ENCODE measurements at regions of chr12 and their contacts with region 1.

Region 1: DNA sequence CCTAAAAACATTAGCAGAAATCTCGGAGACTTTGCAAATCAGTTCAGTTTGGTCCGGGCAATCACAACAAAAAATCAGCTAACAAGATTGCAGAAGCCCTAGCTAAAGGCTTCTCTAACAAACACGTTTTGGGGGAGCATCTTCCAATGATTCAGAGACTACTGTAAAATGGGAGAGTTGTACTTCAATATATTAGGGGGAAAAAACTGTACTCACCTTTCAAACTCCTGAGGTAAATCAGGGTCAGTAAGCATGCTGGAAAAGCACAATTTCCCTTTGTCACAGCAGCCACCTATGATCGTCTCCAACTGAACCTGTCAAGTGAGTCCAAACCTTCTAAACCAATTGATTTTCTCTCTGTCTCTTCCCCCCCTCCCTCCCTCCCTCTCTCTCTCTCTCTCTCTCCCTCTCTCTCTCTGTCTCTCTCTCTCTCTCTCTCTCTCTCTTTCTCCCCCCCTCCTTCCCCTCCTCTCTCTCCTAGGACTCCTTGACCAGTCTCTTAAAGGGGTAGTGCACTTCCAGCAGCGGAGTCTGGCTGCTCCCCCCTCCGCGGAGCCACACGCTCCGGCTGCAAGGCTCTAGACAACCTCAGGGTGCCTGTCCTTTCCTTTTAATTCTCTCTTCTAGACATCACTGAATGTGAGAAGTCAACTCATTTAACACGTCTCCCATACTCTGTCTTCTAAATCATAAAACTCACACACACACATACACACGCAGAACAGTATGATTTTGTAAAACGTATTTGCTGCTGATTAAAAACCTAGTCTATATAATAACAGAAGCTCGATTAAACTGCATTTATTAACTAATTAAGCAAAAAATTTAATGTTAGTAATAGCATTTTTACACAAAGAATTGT is at the start of gene SOX5:
- DNase-seq: no peak
- H3K4me3 Mint-ChIP-seq: no peak within 1 kb of the TSS
- H3K27ac Mint-ChIP-seq: no peak within 1 kb of the TSS
- H3K4me1 Mint-ChIP-seq: no peaks in the 10 kb centered on the region
- H3K27me3 Mint-ChIP-seq: peaks cover 4% of the 10 kb centered on the region
- total RNA-seq, gene SOX5: 1.3 and 3.1 TPM in 2 replicates

Region 2: GRCh38 chr12:24045816-24046257 is 96.3 kb after region 1 on chr12:
- intact Hi-C with region 1: no loop called
- DNase-seq: no peak
- H3K4me3 Mint-ChIP-seq: no peak overlapping the region
- H3K27ac Mint-ChIP-seq: no peak overlapping the region
- H3K4me1 Mint-ChIP-seq: peaks cover 5% of the 10 kb centered on the region
- H3K27me3 Mint-ChIP-seq: no peaks in the 10 kb centered on the region

Region 3: DNA sequence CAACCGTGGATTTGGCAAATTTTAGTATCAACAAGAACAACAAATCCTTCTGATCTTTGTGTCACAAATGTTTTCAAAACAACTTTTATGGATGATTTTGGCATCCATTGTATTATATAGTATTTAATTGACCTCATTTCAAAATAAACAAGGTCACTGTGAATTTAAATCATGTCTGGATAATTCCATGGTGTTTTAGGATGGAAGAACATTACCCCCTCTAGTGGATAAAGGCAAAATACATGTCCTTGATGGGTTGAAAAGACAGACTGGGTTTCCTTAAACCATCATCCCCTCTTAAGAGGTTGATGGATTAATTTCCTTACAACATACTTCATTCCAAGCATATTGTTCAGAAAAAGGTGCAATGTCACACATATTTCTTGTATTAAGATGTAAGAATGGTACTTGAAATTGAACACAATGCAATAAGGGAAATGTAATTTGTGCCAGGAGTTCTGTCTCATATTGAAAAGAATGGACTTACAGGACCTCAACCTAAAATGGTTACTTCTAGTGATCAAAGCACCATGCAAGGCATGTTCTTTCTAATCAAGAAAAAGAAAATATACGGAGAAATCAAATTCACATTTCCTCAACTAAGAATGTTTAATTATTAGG is 647.3 kb after region 1 on chr12:
- intact Hi-C with region 1: loop called (anchors 5 kb)
- DNase-seq: no peak
- H3K4me3 Mint-ChIP-seq: no peak overlapping the region
- H3K27ac Mint-ChIP-seq: no peak overlapping the region
- H3K4me1 Mint-ChIP-seq: no peaks in the 10 kb centered on the region
- H3K27me3 Mint-ChIP-seq: peaks cover 2% of the 10 kb centered on the region

Region 4: DNA sequence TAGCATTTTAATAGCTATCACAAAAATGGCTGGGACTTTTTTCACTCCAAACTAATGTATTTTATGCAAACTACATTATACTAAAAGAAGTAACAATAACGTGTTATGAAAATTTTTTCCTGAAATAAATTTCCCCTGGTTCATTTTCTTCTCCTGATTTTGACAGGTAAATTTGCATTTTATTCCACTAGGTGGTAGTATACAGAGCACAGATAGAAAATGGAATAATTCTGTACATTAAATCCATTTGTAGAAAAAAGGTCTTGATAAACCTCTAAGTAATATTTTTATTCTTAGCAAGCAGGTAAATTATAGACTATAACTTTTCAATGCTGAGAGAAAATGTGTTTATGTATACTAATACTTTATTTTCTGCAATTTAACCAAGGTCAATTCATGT is 902.8 kb after region 1 on chr12:
- intact Hi-C with region 1: no loop called
- DNase-seq: no peak
- H3K4me3 Mint-ChIP-seq: no peak overlapping the region
- H3K27ac Mint-ChIP-seq: no peak overlapping the region
- H3K4me1 Mint-ChIP-seq: peaks cover 14% of the 10 kb centered on the region
- H3K27me3 Mint-ChIP-seq: peaks cover 2% of the 10 kb centered on the region